Activated naive CD4-positive, alpha-beta T cell treated with anti-CD3 and anti-CD28 coated beads for 36 hours (primary cell): ENCODE measurements at regions of chr12 and their contacts with region 1.

Region 1: DNA sequence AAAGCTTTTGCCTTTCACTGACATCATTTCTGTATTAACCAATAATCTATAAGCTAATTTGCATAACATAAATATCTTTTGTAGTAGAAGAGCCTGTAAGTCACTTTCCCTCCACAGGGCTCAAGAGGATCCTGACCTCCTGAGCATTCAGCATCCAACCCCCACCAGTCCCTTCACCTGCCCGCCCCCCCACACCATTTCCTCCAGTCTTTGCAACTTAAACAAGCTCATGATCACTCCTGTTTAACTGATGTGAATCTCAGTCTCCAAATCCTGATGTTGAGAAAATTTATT is 12.0 kb upstream of the CRY1 start:
- DNase-seq: no peak
- H3K4me3 Mint-ChIP-seq: no peak overlapping the region
- H3K27ac Mint-ChIP-seq: no peak overlapping the region
- H3K4me1 Mint-ChIP-seq: no peaks in the 10 kb centered on the region
- H3K27me3 Mint-ChIP-seq: peaks cover 3% of the 10 kb centered on the region

Region 2: DNA sequence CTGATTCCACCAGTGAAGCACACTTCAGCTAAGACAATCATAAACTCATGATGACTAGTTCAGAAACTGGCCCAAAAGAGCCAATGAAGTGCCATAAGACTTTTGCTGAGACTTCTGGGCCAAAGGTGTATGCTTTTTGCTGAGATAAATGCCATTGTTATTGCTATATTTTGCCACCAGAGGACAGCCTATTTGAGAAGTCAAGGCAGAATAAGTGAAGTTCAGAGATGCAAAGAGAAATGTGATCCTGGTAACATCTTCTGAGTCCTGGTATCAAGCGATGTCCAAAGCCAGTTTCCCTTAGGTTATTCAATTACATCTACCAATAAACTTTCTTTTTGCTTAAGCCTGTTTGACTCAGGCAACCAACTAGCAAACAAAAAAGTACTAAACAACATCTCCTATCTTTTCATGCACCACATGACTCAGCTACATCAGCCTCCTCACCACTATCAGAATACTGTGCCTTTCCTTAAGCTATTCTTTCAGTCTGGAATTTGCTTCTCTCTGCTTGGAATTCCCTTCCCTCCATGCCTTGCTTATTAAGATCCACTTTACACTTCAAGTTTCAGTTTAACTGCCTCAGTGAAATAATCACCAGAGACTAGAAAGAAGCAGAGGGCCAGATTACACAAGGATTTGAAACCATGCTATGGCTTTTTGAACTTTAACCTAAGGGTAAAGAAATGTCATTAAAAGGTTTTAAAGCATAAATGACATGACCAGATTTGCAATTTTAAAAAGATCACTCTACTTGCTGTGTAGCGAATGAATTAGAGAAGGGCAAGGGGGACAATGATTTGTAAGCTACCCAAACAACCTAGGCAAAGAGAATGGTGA is 26.0 kb before region 1 on chr12:
- CTCF ChIA-PET with region 1: interaction called, 11 read pairs
- intact Hi-C with region 1: loop called (anchors 1 kb)
- DNase-seq: peak; percentile 17
- H3K4me3 Mint-ChIP-seq: no peak overlapping the region
- H3K27ac Mint-ChIP-seq: no peak overlapping the region
- H3K4me1 Mint-ChIP-seq: peaks cover 14% of the 10 kb centered on the region
- H3K27me3 Mint-ChIP-seq: no peaks in the 10 kb centered on the region

Region 3: GRCh38 chr12:107309020-107309419 is 203.7 kb after region 1 on chr12:
- CTCF ChIA-PET with region 1: no interaction called
- intact Hi-C with region 1: no loop called
- DNase-seq: peak; percentile 46
- H3K4me3 Mint-ChIP-seq: no peak overlapping the region
- H3K27ac Mint-ChIP-seq: no peak overlapping the region
- H3K4me1 Mint-ChIP-seq: peaks cover 12% of the 10 kb centered on the region
- H3K27me3 Mint-ChIP-seq: no peaks in the 10 kb centered on the region